ENCODE measurements at regions of chrX and their contacts with region 1.

Region 1: DNA sequence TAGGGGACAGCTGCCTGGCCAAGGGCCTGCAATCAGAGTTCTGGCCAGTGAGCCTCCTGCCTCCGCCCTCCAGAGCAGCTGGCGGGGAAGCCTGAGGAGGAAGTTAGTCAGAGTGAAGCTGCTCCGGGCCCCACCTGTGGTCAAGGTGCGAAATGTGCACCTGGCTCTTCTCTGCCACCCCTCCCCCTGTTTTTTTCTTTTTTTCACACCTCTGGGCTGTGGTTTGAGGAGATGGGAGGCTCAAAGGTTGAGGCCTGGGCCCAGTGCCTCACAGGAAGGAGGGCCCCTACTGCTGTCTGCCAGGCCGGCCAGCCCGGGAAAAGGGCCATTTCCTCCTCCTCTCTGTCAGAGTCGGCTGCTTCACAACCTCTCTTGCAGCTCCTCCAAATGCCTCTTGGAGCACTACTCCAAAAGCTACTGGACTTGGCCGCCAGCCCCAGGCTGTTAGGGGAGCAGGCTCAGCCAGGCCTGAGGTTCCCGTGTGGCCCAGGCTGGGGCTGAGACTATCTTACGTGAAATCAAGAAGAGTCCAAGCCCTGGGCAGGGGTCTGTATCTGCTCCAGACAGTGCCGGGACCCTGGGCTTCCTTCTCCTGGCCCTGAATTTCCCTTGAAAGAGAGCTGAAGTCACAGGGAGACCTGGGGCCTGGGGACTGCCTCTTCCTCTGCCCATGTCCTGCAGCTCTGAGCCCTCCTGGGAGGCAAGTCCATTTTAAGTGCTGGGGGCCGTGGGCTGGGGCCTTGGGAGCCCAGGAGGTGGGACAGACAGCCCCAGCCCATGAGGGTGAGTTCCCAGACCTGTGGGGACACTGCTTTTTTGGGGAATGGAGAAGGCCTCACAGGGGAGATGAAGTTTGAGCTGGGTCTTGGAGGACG is 4.5 kb upstream of the CXCR3 start:
- DNase-seq: peak in 1 of 2 experiments; percentile 53
- H3K4me3 ChIP-seq: no peak overlapping the region
- H3K27ac ChIP-seq: no peak overlapping the region
- H3K4me1 ChIP-seq: peaks cover 0 to 4% (median 0%) of the 10 kb centered on the region in 4 experiments; a peak in 1 of 7 replicates
- H3K27me3 ChIP-seq: no peaks in the 10 kb centered on the region
- CTCF ChIP-seq: peak in 2 of 3 experiments; percentile 22 to 33; a peak in 2 of 4 replicates
- EP300 ChIP-seq: no peak
- POLR2A ChIP-seq: no peak
- RAD21 ChIP-seq: peak in 1 of 2 experiments; percentile 12; a peak in 1 of 4 replicates

Region 2: GRCh38 chrX:71420686-71421085 is 202.1 kb before region 1 on chrX:
- CTCF ChIA-PET with region 1: no interaction called
- POLR2A ChIA-PET with region 1: no interaction called
- DNase-seq: peak in 1 of 2 experiments; percentile 46
- H3K4me3 ChIP-seq: no peak overlapping the region
- H3K27ac ChIP-seq: no peak overlapping the region
- H3K4me1 ChIP-seq: no peaks in the 10 kb centered on the region
- H3K27me3 ChIP-seq: no peaks in the 10 kb centered on the region
- CTCF ChIP-seq: peak in 2 of 3 experiments; percentile 11 to 22; a peak in 1 of 4 replicates
- EP300 ChIP-seq: no peak
- POLR2A ChIP-seq: no peak
- RAD21 ChIP-seq: peak in 1 of 2 experiments; percentile 36; a peak in 2 of 4 replicates

Region 3: GRCh38 chrX:71586929-71587328 is 35.9 kb before region 1 on chrX:
- CTCF ChIA-PET with region 1: no interaction called
- POLR2A ChIA-PET with region 1: no interaction called
- DNase-seq: no peak
- H3K4me3 ChIP-seq: no peak overlapping the region
- H3K27ac ChIP-seq: no peak overlapping the region
- H3K4me1 ChIP-seq: no peaks in the 10 kb centered on the region
- H3K27me3 ChIP-seq: no peaks in the 10 kb centered on the region
- CTCF ChIP-seq: no peak
- EP300 ChIP-seq: no peak
- POLR2A ChIP-seq: no peak
- RAD21 ChIP-seq: no peak

Region 4: GRCh38 chrX:71632923-71633672 is 10.3 kb after region 1 on chrX:
- CTCF ChIA-PET with region 1: interaction called, 17 read pairs
- POLR2A ChIA-PET with region 1: no interaction called
- DNase-seq: no peak
- H3K4me3 ChIP-seq: no peak overlapping the region
- H3K27ac ChIP-seq: no peak overlapping the region
- H3K4me1 ChIP-seq: no peaks in the 10 kb centered on the region
- H3K27me3 ChIP-seq: no peaks in the 10 kb centered on the region
- CTCF ChIP-seq: no peak
- EP300 ChIP-seq: no peak
- POLR2A ChIP-seq: no peak
- RAD21 ChIP-seq: no peak

Region 5: GRCh38 chrX:72107320-72107719 is 484.5 kb after region 1 on chrX:
- CTCF ChIA-PET with region 1: no interaction called
- POLR2A ChIA-PET with region 1: no interaction called
- DNase-seq: no peak
- H3K4me3 ChIP-seq: no peak overlapping the region
- H3K27ac ChIP-seq: no peak overlapping the region
- H3K4me1 ChIP-seq: peaks cover 0 to 7% (median 1%) of the 10 kb centered on the region in 4 experiments; a peak in 2 of 7 replicates
- H3K27me3 ChIP-seq: no peaks in the 10 kb centered on the region
- CTCF ChIP-seq: peak in 1 of 3 experiments; percentile 11; a peak in 2 of 4 replicates
- EP300 ChIP-seq: no peak
- POLR2A ChIP-seq: no peak
- RAD21 ChIP-seq: peak in 1 of 2 experiments; percentile 15; a peak in 1 of 4 replicates